HCT116 (cell line): ENCODE measurements at regions of chr14 and their contacts with region 1.

Region 1: DNA sequence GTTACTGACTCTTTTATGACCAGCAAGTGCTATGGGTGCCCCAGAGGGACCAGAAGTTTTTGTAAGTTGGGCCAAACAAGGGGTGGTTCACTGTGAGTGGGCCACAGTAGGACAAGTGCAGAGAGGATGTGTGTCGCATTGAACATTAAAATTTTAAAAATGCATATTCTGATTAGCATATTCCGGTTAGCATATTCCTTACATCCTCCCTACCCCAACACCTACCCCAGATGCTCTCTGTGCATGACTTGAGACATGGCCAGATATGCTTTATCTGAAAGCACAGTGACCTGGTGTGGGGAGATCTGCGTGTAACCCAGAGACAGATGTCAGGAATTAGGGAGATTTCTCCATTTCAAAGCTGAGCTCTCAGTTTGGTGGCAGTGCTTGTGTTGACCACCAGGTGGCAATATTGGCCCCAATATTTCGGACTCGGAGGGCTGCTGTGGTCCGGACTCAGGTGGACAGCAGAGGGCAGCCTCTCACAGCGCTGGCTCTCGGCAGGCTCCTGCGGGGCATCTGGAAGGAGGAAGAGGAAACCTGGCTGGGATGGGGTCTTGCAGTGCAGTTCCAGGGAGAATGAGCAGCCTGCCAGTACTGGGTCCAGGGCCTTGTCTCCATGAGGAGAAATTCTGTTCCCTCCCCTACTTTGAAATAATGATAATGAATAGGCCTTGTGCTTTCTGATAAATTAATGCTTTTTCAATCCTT is 1.6 kb upstream of the CEBPE start:
- DNase-seq: peak; percentile 73
- ATAC-seq: peak; percentile 97
- H3K4me3 ChIP-seq: no peak overlapping the region
- H3K27ac ChIP-seq: no peak overlapping the region
- H3K4me1 ChIP-seq: peaks cover 0 to 3% of the 10 kb centered on the region in 2 experiments; a peak in 2 of 4 replicates
- H3K27me3 ChIP-seq: no peaks in the 10 kb centered on the region
- CTCF ChIP-seq: peak; percentile 100
- POLR2A ChIP-seq: no peak
- RAD21 ChIP-seq: peak; percentile 99

Region 2: DNA sequence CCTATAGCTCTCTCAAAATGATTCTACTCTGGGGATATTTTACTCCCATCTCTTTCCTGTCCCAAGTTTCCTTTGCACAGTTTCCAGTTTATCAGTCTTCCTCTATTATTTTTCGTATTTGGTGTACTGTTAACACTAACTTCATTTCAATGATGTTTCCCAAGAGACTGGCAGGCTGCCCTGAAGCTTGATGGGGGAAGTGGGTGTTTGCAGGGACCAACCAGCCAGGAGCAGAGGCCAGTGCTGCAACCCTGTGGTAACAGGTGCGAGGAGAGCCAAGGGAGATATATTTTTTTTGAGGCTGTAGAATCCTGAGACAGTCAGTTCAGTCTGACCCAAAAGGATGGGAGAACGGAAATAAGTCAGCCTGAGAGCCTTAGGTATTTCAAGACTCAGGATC is 10.2 kb after region 1 on chr14:
- CTCF ChIA-PET with region 1: interaction called, 20 read pairs
- POLR2A ChIA-PET with region 1: no interaction called
- RAD21 ChIA-PET with region 1: no interaction called
- intact Hi-C with region 1: no loop called
- DNase-seq: no peak
- ATAC-seq: no peak
- H3K4me3 ChIP-seq: no peak overlapping the region
- H3K27ac ChIP-seq: no peak overlapping the region
- H3K4me1 ChIP-seq: no peaks in the 10 kb centered on the region
- H3K27me3 ChIP-seq: no peaks in the 10 kb centered on the region
- CTCF ChIP-seq: no peak
- POLR2A ChIP-seq: no peak
- RAD21 ChIP-seq: no peak

Region 3: DNA sequence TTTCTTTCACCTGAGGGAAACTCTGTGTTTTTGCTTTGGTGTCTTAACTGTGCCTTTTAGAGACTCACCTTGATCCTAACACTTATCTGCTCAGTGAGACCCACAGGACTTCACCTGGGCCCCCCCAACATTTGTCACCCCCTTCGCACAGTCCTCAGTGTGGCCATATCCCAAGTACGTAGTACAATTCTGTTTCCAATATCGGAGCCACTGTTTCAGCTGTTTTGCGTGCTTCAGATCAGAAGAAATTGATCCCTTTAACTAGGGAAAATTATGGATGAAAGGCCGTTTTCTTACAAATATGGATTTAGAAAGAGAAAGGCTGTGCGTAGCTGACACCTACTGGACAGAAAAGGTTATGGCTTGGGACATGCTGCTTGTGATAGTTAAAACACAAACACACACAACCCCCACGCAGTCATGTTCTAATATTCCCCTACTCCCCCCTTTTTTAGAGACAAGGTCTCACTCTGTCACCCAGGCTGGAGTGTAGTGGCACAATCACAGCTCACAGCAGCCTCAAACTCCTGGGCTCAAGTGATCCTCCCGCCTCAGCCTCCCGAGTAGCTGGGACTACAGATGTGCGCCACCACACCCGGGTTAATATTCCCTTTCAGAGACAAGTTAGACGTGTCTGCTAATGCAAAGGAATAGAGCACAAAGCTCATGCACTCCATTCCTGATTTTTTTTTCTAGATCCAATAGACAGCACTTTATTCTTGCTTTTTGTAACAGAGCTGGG is 66.4 kb after region 1 on chr14:
- CTCF ChIA-PET with region 1: interaction called, 162 read pairs
- POLR2A ChIA-PET with region 1: interaction called, 9 read pairs
- RAD21 ChIA-PET with region 1: interaction called, 10 to 24 read pairs
- intact Hi-C with region 1: loop called (anchors 1 kb)
- DNase-seq: peak; percentile 64
- ATAC-seq: peak; percentile 68
- H3K4me3 ChIP-seq: no peak overlapping the region
- H3K27ac ChIP-seq: no peak overlapping the region
- H3K4me1 ChIP-seq: peaks cover 6 to 14% of the 10 kb centered on the region in 2 experiments; a peak in 3 of 4 replicates
- H3K27me3 ChIP-seq: no peaks in the 10 kb centered on the region
- CTCF ChIP-seq: peak; percentile 76 to 98 (median 78)
- POLR2A ChIP-seq: no peak
- RAD21 ChIP-seq: peak; percentile 94

Region 4: GRCh38 chr14:23320774-23321571 is 200.3 kb after region 1 on chr14 and contains the start of gene PABPN1:
- CTCF ChIA-PET with region 1: interaction called, 10 read pairs
- POLR2A ChIA-PET with region 1: no interaction called
- RAD21 ChIA-PET with region 1: no interaction called
- intact Hi-C with region 1: no loop called
- DNase-seq: peak; percentile 100
- ATAC-seq: peak; percentile 91
- H3K4me3 ChIP-seq: peak within 1 kb of the TSS; percentile 64 to 98
- H3K27ac ChIP-seq: peak within 1 kb of the TSS; percentile 83
- H3K4me1 ChIP-seq: peaks cover 12 to 23% of the 10 kb centered on the region in 2 experiments; a peak in 3 of 4 replicates
- H3K27me3 ChIP-seq: no peaks in the 10 kb centered on the region
- CTCF ChIP-seq: no peak
- POLR2A ChIP-seq: no peak
- RAD21 ChIP-seq: no peak
- total RNA-seq, gene PABPN1: 184 TPM